Mammary epithelial cell (primary cell): ENCODE measurements at regions of chr17 and their contacts with region 1.

Region 1: GRCh38 chr17:37062021-37062420 is 113.3 kb downstream of the AATF start:
- DNase-seq: no peak
- H3K4me3 ChIP-seq: no peak overlapping the region
- H3K27ac ChIP-seq: no peak overlapping the region
- H3K4me1 ChIP-seq: no peaks in the 10 kb centered on the region
- H3K27me3 ChIP-seq: no peaks in the 10 kb centered on the region
- CTCF ChIP-seq: no peak

Region 2: GRCh38 chr17:37024181-37024637 is 37.8 kb before region 1 on chr17:
- CTCF ChIA-PET with region 1: no interaction called
- dilution Hi-C with region 1: loop called (anchors 5 kb)
- in situ Hi-C with region 1: no loop called
- intact Hi-C with region 1: no loop called
- DNase-seq: no peak
- H3K4me3 ChIP-seq: no peak overlapping the region
- H3K27ac ChIP-seq: no peak overlapping the region
- H3K4me1 ChIP-seq: no peaks in the 10 kb centered on the region
- H3K27me3 ChIP-seq: no peaks in the 10 kb centered on the region
- CTCF ChIP-seq: no peak

Region 3: DNA sequence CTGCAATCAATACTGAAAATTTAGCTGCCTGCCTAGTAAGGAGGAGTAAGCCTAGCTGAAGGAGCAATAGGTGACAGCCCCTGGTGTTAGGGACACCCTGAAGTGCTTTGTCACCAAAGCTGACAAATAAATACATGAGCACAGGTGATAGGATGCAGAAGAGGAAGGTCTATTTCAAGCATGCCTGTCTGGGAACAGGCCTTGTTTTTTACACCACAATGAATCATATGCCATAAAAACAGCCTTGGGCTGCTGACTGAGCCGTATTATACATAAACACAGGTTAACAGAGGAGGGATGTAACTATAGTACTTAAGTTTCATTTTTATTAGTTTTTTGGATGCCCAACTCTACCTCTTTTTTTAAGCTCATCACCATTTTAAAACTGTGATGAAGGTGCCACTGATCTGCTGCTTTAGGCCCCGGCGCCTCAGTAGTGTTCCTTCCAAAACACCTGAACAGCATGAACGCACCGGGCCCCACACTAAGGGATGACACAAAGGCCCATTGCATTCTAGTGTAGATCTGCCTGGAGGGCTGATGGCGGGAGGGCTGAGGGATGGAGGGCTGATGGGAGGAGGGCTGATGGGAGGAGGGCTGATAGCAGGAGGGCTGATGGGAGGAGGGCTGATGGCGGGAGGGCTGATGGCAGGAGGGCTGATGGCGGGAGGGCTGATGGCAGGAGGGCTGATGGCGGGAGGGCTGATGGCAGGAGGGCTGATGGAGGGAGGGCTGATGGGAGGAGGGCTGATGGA is 37.1 kb after region 1 on chr17:
- CTCF ChIA-PET with region 1: no interaction called
- dilution Hi-C with region 1: no loop called
- in situ Hi-C with region 1: no loop called
- intact Hi-C with region 1: no loop called
- DNase-seq: peak; percentile 71
- H3K4me3 ChIP-seq: no peak overlapping the region
- H3K27ac ChIP-seq: no peak overlapping the region
- H3K4me1 ChIP-seq: peaks cover 11% of the 10 kb centered on the region
- H3K27me3 ChIP-seq: no peaks in the 10 kb centered on the region
- CTCF ChIP-seq: no peak

Region 4: DNA sequence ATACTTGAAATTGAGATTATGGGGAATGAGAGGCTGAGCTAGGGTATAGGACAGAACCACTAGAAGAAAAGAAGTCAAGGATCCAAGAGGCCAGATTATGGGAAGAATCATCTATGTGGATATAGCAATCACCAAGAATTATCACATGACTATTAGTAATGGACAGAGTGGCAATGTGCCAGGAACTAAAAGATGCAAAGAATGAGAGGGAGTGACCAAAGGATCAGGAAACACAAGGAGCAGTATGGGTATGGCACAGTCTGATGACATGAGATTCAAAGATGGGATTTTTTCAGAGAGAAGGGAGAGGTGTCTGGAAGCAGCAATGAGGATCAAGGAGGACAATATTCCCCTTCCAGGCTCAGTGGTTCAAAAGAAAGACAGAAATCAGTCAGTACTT is 98.9 kb after region 1 on chr17:
- CTCF ChIA-PET with region 1: no interaction called
- dilution Hi-C with region 1: no loop called
- in situ Hi-C with region 1: no loop called
- intact Hi-C with region 1: no loop called
- DNase-seq: peak; percentile 70
- H3K4me3 ChIP-seq: no peak overlapping the region
- H3K27ac ChIP-seq: no peak overlapping the region
- H3K4me1 ChIP-seq: peaks cover 10% of the 10 kb centered on the region
- H3K27me3 ChIP-seq: no peaks in the 10 kb centered on the region
- CTCF ChIP-seq: no peak